Left colon (tissue), 2 donors: ENCODE measurements at regions of chr2 and their contacts with region 1.

Region 1: DNA sequence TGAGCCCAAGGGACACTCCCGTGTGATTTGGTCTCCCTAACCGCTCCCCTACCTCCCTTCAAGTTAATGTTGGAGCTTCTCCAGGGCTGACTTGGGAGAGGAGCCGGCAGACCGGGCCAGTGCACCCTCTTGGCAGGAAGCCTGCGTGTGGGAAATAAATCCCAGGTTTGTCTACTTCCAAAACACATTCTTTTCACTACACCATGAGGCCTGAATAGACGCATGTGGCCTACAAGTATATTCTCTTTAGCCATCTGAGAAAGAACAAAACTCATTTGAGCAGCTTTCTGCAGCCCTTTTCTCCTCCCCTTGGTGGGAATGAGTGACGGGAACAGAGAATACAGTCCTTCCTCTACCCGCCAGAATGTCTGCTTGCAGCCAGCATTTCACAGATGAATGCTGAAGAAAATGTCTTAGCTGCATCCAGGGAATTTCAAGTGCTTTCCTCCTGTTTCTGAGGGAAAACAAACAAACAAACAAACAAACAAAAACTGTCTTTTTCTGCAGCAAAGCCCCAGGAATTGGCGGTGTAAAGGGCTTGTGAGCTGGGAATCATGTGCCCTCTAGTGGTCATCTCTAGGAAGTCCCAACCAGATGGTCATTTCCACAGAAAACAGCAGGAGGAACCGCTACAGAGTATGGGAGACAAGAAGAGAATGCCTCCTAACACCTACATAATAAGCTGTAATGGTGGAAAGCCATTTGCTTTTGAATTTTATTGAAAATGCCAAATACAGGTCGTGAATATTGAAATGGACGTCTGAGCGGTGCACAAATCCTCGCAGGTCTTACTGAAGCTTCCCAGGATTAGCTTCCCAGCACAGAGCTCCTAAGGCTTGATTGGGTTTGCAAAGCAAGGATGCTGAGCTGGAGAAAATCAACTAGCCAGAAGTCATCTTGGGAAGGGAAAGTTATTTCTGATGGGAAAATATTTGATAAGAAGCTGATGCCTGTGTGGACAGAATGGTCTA is 41.2 kb upstream of the DAPL1 start:
- DNase-seq: peak in 1 of 2 donors; percentile 9
- ATAC-seq: peak; percentile 82

Region 2: DNA sequence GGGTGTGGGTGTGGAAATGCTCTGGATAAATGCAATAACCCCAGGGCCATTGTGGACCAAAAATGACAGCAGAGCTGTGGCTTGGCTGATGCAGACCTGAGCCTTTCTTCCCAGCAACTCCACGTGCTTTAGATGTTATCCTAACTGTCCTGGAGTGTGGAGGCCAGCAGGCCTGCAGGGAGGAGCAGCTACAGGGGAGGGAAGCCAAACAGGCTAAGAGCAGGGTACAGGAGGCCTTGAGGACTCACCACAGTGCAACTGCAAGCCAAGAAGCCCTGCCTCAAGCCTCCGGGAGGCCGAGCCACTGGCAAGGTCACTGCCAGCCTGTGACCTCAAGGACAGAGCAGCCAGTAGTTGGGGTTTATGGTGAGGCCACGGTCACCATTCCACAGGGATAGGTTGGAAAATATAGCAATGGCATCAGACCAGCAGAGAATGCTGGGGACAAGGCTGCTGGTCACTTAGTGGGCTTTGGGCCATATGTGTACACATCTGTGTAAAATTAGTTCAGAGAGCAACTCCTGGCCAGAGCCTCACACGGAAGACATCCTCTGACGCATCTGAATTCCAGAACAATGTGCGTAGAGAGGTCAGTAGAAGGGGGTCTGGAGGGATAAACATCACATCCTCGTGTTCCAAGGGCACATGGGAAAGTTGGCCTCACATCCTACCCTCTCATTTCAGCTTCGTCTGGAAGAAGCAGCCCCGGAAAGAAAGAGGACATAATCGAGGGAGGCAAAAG is 728.5 kb before region 1 on chr2:
- intact Hi-C with region 1: loop called (anchors 5 to 10 kb)
- DNase-seq: no peak
- ATAC-seq: no peak

Region 3: DNA sequence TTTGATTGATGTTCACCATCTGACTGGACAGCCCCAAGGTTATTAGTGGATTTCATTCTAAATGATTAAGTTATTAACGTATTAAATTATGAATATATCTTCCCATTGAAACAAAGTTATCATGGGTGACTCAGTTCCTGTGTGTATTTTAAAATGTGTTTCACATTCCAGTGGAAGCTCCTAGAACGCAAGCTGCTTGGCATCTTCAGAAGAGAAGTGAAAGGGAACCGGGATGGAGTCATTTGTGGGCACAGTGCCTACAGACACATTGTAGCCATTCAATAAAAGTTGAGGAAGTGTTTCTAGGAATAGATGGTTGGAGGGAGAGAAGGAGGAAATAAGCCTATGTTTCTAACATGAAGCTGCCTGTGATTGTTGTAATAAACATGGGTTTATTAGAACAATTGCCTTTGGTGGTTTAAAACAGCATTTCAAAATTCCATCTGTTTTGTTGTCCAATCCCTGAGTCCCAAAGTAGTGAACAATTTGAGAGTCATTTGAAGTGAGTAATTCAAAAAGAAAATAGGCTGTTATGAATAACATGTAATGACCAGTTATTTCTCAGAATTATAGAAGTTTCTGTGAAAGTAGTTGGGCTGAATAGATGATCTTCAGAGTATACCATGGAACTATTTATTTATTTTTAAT is 153.6 kb before region 1 on chr2:
- intact Hi-C with region 1: no loop called
- DNase-seq: peak; percentile 68 to 71
- ATAC-seq: peak; percentile 96